Activated naive CD4-positive, alpha-beta T cell treated with anti-CD3 and anti-CD28 coated beads for 36 hours (primary cell): ENCODE measurements at regions of chr6 and their contacts with region 1.

Region 1: DNA sequence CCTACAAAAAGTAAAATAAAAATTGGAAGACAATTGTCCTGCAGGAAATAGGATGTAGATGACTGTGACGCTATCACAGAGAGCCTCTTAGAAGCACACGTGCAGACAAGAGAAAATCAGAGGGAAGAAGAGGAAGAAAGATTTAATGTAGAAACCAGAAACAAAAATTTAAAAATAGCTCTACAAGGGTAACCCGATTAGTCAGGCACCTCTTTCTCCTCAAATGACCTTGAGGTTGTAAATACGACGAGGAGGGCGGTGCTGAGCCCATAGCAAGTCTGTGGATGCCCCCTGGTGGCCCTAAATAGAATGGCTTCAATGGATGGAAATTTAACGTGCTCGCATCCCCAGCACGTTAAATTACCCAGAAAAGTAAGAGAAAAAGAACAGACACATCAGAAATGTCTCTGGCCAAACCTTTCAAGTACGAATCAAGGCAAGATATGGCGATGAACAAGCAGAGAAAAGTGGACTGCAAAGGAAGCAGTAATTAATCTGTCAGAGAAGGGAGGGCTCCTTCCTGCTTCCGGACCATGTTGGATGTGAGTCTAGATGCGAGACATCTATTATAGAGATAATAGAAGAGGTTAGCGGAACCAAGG is 4.2 kb upstream of the PRPH2 start:
- DNase-seq: peak; percentile 84
- H3K4me3 Mint-ChIP-seq: peak overlapping the region; percentile 76
- H3K27ac Mint-ChIP-seq: peak overlapping the region; percentile 91
- H3K4me1 Mint-ChIP-seq: peaks cover 15% of the 10 kb centered on the region
- H3K27me3 Mint-ChIP-seq: no peaks in the 10 kb centered on the region

Region 2: GRCh38 chr6:41850861-41851260 is 875.7 kb before region 1 on chr6:
- CTCF ChIA-PET with region 1: no interaction called
- intact Hi-C with region 1: no loop called
- DNase-seq: no peak
- H3K4me3 Mint-ChIP-seq: no peak overlapping the region
- H3K27ac Mint-ChIP-seq: no peak overlapping the region
- H3K4me1 Mint-ChIP-seq: peaks cover 5% of the 10 kb centered on the region
- H3K27me3 Mint-ChIP-seq: no peaks in the 10 kb centered on the region

Region 3: GRCh38 chr6:42661540-42662153 is 64.9 kb before region 1 on chr6:
- CTCF ChIA-PET with region 1: interaction called, 41 read pairs
- intact Hi-C with region 1: loop called (anchors 1 kb)
- DNase-seq: peak; percentile 92
- H3K4me3 Mint-ChIP-seq: no peak overlapping the region
- H3K27ac Mint-ChIP-seq: no peak overlapping the region
- H3K4me1 Mint-ChIP-seq: no peaks in the 10 kb centered on the region
- H3K27me3 Mint-ChIP-seq: no peaks in the 10 kb centered on the region

Region 4: GRCh38 chr6:42692137-42692911 is 34.3 kb before region 1 on chr6:
- CTCF ChIA-PET with region 1: interaction called, 11 read pairs
- intact Hi-C with region 1: loop called (anchors 2 kb)
- DNase-seq: peak; percentile 27
- H3K4me3 Mint-ChIP-seq: no peak overlapping the region
- H3K27ac Mint-ChIP-seq: peak overlapping the region; percentile 44
- H3K4me1 Mint-ChIP-seq: peaks cover 38% of the 10 kb centered on the region
- H3K27me3 Mint-ChIP-seq: no peaks in the 10 kb centered on the region